HAP-1 (cell line): ENCODE measurements at regions of chr14 and their contacts with region 1.

Region 1: DNA sequence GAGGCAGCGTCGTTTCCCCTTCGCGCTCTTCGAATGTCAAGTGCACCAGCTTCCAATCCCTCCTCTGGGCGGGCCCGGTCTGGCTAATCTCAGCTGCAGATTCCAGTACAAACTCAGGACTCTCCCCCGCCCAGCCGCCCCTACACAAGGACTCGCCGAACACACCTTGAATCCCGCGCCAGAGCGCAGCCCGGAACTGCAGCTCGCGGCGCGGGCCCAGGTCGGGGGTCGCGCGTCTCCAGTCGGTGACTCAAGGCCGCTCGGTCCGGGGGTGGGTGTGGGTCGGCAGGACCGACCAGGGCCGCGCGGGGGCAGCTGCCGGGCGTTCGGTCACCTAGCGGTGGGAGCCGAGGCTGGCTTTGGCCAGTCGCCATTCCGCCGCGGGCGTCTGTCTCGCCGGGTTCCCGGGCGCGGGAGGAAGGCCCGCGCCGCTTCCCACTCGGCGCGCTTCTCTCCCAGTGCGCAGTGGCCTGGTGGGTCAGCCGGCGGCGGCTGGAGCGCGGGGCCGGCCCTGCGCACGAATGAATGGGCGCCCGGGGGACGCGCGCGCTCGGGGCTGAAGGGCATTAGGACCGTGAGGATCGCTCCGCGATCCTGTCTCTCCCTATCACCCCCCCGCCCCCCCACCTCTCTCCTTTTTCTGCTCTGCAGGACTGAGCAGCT is at the start of gene GALNT16:
- DNase-seq: peak in 1 of 2 experiments; percentile 68
- H3K4me3 ChIP-seq: peak within 1 kb of the TSS; percentile 39
- H3K4me1 ChIP-seq: no peaks in the 10 kb centered on the region
- H3K27me3 ChIP-seq: peaks cover 44% of the 10 kb centered on the region

Region 2: GRCh38 chr14:69475194-69475818 is 215.6 kb after region 1 on chr14:
- in situ Hi-C with region 1: loop called (anchors 10 kb)
- DNase-seq: peak in 1 of 2 experiments; percentile 10
- H3K4me3 ChIP-seq: no peak overlapping the region
- H3K4me1 ChIP-seq: no peaks in the 10 kb centered on the region
- H3K27me3 ChIP-seq: no peaks in the 10 kb centered on the region